Activated naive CD4-positive, alpha-beta T cell treated with anti-CD3 and anti-CD28 coated beads, Interleukin-2, amount 10 ng/mL, durations not matched to agents 7 days and 5 days (primary cell): ENCODE measurements at regions of chr6 and their contacts with region 1.

Region 1: GRCh38 chr6:87066449-87067333 is 28.2 kb downstream of the CGA start:
- DNase-seq: peak; percentile 60
- H3K4me3 Mint-ChIP-seq: no peak overlapping the region
- H3K27ac Mint-ChIP-seq: no peak overlapping the region
- H3K4me1 Mint-ChIP-seq: peaks cover 2% of the 10 kb centered on the region
- H3K27me3 Mint-ChIP-seq: peaks cover 18% of the 10 kb centered on the region

Region 2: GRCh38 chr6:87078983-87079616 is 12.4 kb after region 1 on chr6:
- CTCF ChIA-PET with region 1: interaction called, 21 read pairs
- DNase-seq: peak; percentile 70
- H3K4me3 Mint-ChIP-seq: no peak overlapping the region
- H3K27ac Mint-ChIP-seq: no peak overlapping the region
- H3K4me1 Mint-ChIP-seq: no peaks in the 10 kb centered on the region
- H3K27me3 Mint-ChIP-seq: peaks cover 13% of the 10 kb centered on the region